Activated naive CD4-positive, alpha-beta T cell treated with anti-CD3 and anti-CD28 coated beads for 36 hours (primary cell): ENCODE measurements at regions of chr2 and their contacts with region 1.

Region 1: DNA sequence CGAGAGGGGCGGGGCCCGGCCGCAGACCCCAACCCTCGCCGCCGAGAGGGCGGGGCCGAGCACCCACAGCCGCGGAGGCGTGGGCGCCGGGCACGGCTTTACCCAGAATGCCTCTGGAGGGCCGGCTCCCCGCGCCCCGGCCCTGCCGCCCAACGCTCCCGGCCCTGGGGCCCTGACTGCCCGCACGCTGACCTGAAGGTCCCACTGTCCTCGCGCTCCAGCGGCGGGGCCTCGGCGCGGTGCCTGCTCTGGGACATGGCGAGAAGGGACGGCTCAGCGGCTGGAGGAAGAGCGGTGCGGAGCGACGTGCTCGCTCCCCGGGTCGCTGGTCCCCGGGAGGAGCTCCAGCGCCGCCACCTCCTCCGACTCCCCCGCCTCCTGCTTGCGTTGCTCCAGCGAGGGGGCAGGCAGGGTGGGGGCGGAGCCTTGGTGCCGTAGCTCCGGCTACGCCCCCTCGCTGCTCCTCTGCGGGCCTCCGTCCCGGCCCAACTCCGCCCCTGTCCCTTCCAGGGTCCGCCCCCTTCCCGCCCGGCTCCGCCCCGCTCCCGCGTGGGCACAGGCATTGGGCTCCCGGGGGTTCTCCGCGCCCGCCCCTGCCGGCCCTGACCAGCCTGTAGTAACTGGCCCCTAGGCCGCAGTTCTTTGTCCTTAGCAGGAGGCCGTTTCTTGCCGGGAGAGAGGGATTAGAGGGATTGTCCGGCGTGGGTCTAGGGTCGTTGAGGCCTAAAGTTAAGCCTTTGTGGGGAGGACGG is at the starts of genes PJVK and PRKRA:
- DNase-seq: peak; percentile 96
- H3K4me3 Mint-ChIP-seq: peak within 1 kb of the TSS; percentile 91
- H3K27ac Mint-ChIP-seq: peak within 1 kb of the TSS; percentile 97
- H3K4me1 Mint-ChIP-seq: peaks cover 27% of the 10 kb centered on the region
- H3K27me3 Mint-ChIP-seq: no peaks in the 10 kb centered on the region
- total RNA-seq, gene PJVK: 2.0 to 2.4 TPM
- total RNA-seq, gene PRKRA: 78.2 to 82.9 TPM

Region 2: DNA sequence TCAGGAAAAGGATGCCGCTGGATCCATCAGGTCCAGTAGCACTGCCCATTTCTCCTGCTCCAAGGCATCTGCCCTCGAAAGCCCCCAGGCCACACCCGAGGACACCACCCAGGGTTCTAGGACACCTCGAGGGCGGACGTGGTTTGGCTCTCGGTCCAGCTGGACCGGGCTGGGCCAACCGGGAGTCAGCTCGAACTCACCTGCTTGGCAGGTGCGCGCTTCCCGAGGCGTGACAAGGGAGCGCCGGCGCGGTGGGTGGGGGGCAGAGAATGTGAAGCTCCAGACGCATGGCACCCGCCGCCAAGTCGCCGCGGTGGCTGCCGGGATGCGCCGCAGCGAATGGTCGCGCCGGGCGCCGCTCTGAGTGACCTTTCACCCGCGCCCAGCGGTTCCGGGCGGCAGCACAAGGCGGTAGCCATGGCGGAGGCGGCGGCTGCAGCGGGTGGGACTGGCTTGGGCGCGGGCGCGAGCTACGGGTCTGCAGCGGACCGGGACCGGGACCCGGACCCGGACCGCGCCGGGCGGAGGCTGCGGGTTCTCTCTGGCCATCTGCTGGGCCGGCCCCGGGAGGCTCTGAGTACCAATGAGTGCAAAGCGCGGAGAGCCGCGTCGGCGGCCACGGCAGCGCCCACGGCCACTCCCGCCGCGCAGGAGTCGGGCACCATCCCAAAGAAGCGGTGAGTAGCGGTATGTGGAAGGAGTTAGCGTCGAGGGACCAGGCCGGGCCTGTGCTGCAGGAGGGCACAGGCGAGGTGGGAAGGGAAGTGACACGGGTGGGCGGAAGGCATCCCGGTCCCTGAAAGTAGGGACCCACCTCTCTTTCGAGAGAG is 1058.4 kb before region 1 on chr2 and contains the start of gene AGPS:
- CTCF ChIA-PET with region 1: no interaction called
- intact Hi-C with region 1: loop called (anchors 10 kb)
- DNase-seq: peak; percentile 85
- H3K4me3 Mint-ChIP-seq: peak within 1 kb of the TSS; percentile 93
- H3K27ac Mint-ChIP-seq: peak within 1 kb of the TSS; percentile 62
- H3K4me1 Mint-ChIP-seq: peaks cover 59% of the 10 kb centered on the region
- H3K27me3 Mint-ChIP-seq: no peaks in the 10 kb centered on the region
- total RNA-seq, gene AGPS: 50.7 to 51.8 TPM

Region 3: GRCh38 chr2:178177066-178177679 is 273.8 kb before region 1 on chr2:
- CTCF ChIA-PET with region 1: no interaction called
- intact Hi-C with region 1: no loop called
- DNase-seq: no peak
- H3K4me3 Mint-ChIP-seq: no peak overlapping the region
- H3K27ac Mint-ChIP-seq: no peak overlapping the region
- H3K4me1 Mint-ChIP-seq: no peaks in the 10 kb centered on the region
- H3K27me3 Mint-ChIP-seq: peaks cover 13% of the 10 kb centered on the region

Region 4: GRCh38 chr2:178317811-178318210 is 133.1 kb before region 1 on chr2:
- CTCF ChIA-PET with region 1: no interaction called
- intact Hi-C with region 1: no loop called
- DNase-seq: no peak
- H3K4me3 Mint-ChIP-seq: no peak overlapping the region
- H3K27ac Mint-ChIP-seq: no peak overlapping the region
- H3K4me1 Mint-ChIP-seq: no peaks in the 10 kb centered on the region
- H3K27me3 Mint-ChIP-seq: peaks cover 10% of the 10 kb centered on the region

Region 5: GRCh38 chr2:178414266-178415247 is 36.4 kb before region 1 on chr2:
- CTCF ChIA-PET with region 1: interaction called, 5 read pairs
- intact Hi-C with region 1: loop called (anchors 1 kb)
- DNase-seq: peak; percentile 93
- H3K4me3 Mint-ChIP-seq: peak overlapping the region; percentile 79
- H3K27ac Mint-ChIP-seq: peak overlapping the region; percentile 90
- H3K4me1 Mint-ChIP-seq: peaks cover 12% of the 10 kb centered on the region
- H3K27me3 Mint-ChIP-seq: no peaks in the 10 kb centered on the region

Region 6: DNA sequence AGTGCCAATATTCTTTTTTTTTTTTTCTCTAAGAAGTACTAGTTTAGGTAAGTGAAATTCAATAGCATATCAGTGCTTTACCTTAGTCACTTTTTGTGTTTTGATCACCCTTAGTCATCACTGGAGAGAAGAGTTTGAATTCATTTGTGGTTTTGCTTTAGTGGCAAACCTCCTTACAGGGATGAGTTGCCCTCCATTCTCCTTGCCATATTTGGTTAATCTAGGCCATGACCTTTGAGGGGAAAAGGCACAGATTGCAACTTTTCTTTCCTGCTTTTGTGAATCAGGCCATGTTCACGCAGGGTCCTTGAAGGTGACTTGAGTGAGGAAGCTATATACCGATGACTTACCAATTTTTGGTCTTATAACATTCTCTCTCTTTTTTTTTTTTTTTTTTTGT is 63.7 kb after region 1 on chr2:
- CTCF ChIA-PET with region 1: no interaction called
- intact Hi-C with region 1: loop called (anchors 1 kb)
- DNase-seq: peak; percentile 69
- H3K4me3 Mint-ChIP-seq: no peak overlapping the region
- H3K27ac Mint-ChIP-seq: peak overlapping the region; percentile 65
- H3K4me1 Mint-ChIP-seq: peaks cover 25% of the 10 kb centered on the region
- H3K27me3 Mint-ChIP-seq: no peaks in the 10 kb centered on the region

Region 7: GRCh38 chr2:178530625-178531142 is 79.7 kb after region 1 on chr2:
- CTCF ChIA-PET with region 1: no interaction called
- intact Hi-C with region 1: loop called (anchors 1 kb)
- DNase-seq: peak; percentile 66
- H3K4me3 Mint-ChIP-seq: no peak overlapping the region
- H3K27ac Mint-ChIP-seq: peak overlapping the region; percentile 15
- H3K4me1 Mint-ChIP-seq: peaks cover 46% of the 10 kb centered on the region
- H3K27me3 Mint-ChIP-seq: no peaks in the 10 kb centered on the region